ENCODE measurements at regions of chr3 and their contacts with region 1.

Region 1: DNA sequence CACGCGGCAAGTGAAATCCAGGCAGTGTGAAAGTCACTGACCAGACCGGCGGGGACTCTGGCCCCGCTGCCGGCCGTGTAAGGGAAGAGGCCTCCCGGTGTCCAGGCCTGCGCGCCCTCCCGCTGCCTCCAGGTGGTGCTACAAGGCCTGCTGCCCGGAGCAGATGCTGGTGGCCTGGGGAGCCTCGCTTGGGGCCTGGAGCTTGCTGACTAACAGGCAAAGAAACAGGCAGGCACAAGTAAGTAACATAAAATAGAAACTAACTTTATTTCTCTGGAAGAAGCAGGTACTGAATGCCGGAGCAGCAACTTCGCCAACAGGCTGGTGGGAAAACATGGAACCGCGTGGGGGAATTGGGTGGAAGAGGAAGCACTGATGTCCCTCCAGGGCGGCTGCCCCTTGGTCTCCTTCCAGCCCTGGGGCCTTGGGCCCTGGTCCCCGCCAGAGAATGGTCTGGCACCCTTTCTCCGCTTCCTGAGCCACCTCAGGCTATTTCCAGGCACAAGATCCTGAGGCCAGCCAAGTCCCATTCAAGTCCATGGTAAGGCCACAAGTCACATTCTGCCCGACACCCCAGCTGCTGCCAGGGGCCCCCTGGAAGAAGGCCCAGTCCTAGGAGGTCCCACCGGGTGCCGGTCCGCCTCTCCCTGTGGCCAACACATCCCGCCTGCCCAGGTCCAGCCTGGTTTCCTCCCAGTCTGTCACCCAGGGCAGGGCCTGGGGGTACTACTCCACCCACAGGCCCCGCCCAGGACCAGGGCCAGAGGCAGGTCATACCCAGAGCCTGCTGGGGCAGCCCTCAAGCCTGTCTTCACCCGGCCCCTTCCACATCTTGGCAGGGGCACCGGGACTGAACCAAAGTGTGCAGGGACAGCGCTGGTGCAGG is 45.0 kb downstream of the TNK2 start:
- DNase-seq: peak; percentile 50
- H3K4me3 Mint-ChIP-seq: no peak overlapping the region
- H3K27ac Mint-ChIP-seq: peak overlapping the region; percentile 49
- H3K4me1 Mint-ChIP-seq: peaks cover 5% of the 10 kb centered on the region
- H3K27me3 Mint-ChIP-seq: no peaks in the 10 kb centered on the region

Region 2: DNA sequence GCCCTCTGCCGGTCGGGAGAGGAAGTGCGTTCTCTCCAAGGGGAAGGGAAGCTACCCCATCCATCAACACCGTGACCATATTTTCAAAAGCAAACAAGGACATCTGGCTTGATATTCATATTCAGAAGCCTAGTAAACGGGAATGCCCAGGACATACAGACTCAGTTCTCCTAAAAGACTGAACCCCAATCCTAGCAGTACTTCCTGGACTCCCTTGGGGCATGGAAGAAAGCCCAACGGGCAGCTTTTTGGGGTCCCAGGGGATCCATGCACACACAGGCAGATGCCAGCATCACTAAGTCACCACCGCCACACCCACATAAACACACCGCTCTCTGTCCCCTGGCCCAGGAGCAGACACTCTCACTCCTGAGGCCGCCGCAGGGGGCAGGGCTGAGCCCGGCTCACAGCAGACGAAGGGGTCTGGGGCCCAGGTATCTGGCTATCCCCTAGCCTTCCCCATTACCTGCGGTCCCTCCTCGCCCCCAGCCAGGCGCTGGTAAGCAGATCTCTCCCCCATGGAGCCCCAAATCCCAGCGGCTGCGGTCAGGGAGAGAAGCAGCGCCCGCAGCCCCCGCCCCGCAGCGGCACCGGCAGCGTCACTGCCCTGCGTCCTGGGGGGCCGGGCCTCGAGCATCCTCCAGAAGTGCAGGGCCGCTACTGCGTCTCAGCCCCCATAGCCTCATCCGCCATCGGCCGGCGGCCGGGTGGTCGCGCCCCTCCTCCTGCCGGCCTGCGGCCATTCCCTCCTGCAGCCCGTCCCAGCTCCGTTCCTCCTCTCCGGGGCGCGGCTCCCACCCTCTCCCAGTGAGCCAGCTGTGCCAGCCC is 31.6 kb after region 1 on chr3:
- intact Hi-C with region 1: loop called (anchors 1 kb)
- DNase-seq: peak; percentile 64
- H3K4me3 Mint-ChIP-seq: peak overlapping the region; percentile 83
- H3K27ac Mint-ChIP-seq: peak overlapping the region; percentile 81
- H3K4me1 Mint-ChIP-seq: peaks cover 34% of the 10 kb centered on the region
- H3K27me3 Mint-ChIP-seq: no peaks in the 10 kb centered on the region